Activated naive CD4-positive, alpha-beta T cell treated with anti-CD3 and anti-CD28 coated beads, Interleukin-2, amount 10 ng/mL, durations not matched to agents 7 days and 5 days (primary cell): ENCODE measurements at regions of chr16 and their contacts with region 1.

Region 1: DNA sequence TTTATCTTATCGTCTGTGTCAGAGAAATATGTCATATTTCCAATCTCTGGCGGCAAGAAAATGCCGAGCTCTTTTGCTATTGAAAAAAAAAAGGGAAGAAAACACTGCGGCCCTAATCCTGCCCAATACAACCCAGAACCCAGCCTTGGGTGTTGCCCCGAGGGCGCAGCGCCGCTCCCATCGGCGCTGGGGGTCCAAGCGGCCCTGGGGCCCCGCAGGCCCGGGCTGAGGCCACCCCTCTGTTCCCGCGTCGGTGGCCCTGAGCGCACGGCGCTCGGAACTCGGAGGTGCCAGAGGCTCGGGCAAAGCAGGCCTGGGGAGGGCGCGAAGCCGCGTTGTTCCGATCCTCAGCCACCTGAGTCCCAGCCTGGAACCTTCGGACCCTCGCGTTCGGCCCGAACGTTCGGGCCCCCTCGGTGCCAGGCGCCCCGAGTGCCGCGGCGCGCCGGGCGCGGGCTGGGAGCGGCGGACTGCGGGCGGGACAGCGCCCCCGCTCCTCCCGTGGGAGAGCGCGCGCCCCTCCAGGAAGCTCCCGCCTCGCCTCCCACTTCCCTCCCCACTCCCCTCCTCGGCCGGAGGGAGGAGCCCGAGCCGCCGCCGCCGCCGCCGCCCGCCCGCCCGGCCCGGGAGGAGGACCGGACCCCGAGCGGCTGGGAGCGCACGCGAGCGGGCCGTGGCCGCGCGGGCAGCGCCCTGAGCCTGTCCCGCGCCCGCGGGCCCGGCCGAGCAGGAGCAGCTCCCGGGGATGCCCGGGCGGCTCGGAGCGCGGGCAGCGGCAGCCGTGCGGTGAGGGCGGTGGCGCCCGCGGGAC is at the start of gene CPNE2:
- DNase-seq: peak; percentile 58
- H3K4me3 Mint-ChIP-seq: peak within 1 kb of the TSS; percentile 77
- H3K27ac Mint-ChIP-seq: no peak within 1 kb of the TSS
- H3K4me1 Mint-ChIP-seq: peaks cover 14% of the 10 kb centered on the region
- H3K27me3 Mint-ChIP-seq: peaks cover 61% of the 10 kb centered on the region

Region 2: GRCh38 chr16:56888806-56889205 is 203.4 kb before region 1 on chr16:
- CTCF ChIA-PET with region 1: no interaction called
- DNase-seq: no peak
- H3K4me3 Mint-ChIP-seq: no peak overlapping the region
- H3K27ac Mint-ChIP-seq: no peak overlapping the region
- H3K4me1 Mint-ChIP-seq: no peaks in the 10 kb centered on the region
- H3K27me3 Mint-ChIP-seq: peaks cover 38% of the 10 kb centered on the region

Region 3: GRCh38 chr16:57102888-57103858 is 11.0 kb after region 1 on chr16:
- CTCF ChIA-PET with region 1: interaction called, 14 read pairs
- DNase-seq: no peak
- H3K4me3 Mint-ChIP-seq: no peak overlapping the region
- H3K27ac Mint-ChIP-seq: no peak overlapping the region
- H3K4me1 Mint-ChIP-seq: peaks cover 15% of the 10 kb centered on the region
- H3K27me3 Mint-ChIP-seq: peaks cover 7% of the 10 kb centered on the region

Region 4: DNA sequence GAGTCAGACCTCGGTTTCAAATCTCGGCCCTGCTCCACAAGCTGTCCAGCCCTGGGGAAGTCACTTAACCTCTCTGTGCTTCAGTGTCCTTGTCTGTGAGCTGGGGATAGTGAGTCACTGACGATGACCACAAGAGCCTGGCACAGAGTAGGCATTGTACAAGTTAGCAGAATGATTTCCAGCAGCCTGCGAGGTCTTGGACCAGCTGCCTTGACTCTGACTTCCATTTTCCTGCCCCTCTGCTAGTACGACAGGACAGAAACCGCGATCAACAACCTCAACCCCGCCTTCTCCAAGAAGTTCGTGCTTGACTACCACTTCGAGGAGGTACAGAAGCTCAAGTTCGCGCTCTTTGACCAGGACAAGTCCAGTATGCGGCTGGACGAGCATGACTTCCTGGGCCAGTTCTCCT is 20.9 kb after region 1 on chr16:
- CTCF ChIA-PET with region 1: interaction called, 14 read pairs
- DNase-seq: no peak
- H3K4me3 Mint-ChIP-seq: no peak overlapping the region
- H3K27ac Mint-ChIP-seq: no peak overlapping the region
- H3K4me1 Mint-ChIP-seq: no peaks in the 10 kb centered on the region
- H3K27me3 Mint-ChIP-seq: peaks cover 12% of the 10 kb centered on the region

Region 5: DNA sequence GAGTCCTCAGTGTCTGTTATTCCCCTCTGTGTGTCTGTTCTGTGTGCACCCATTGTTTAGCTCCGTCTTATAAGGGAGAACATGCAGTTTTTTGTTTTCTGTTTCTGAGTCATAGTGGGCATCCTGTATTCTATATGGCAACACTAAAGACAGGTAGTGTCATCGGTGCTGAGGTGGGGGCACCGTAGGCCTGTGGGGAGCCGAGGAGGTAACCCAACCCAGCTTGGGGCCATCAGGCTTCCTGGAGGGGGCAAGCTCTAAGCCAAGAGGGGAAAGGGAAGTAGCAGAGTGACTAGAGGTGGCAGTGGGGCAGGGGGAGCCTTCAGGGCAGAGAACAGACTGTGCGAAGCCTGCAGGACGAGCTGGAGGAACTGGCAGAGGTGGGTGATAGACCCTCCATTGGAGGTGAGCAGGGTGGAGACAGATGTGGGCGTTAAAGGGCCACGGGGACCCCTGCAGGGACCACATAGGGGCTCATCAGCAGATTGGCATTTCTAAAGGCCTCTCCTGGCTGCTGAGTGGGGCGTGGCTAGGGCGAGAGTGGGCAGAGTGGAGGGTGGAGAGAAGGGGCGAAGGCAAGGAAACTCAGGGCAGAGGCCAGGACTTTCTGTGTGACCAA is 36.7 kb after region 1 on chr16:
- CTCF ChIA-PET with region 1: interaction called, 13 read pairs
- DNase-seq: peak; percentile 66
- H3K4me3 Mint-ChIP-seq: peak overlapping the region; percentile 16
- H3K27ac Mint-ChIP-seq: peak overlapping the region; percentile 91
- H3K4me1 Mint-ChIP-seq: peaks cover 87% of the 10 kb centered on the region
- H3K27me3 Mint-ChIP-seq: no peaks in the 10 kb centered on the region

Region 6: GRCh38 chr16:57167953-57168352 is 75.8 kb after region 1 on chr16:
- CTCF ChIA-PET with region 1: interaction called, 10 read pairs
- DNase-seq: peak; percentile 31
- H3K4me3 Mint-ChIP-seq: no peak overlapping the region
- H3K27ac Mint-ChIP-seq: no peak overlapping the region
- H3K4me1 Mint-ChIP-seq: peaks cover 3% of the 10 kb centered on the region
- H3K27me3 Mint-ChIP-seq: no peaks in the 10 kb centered on the region

Region 7: DNA sequence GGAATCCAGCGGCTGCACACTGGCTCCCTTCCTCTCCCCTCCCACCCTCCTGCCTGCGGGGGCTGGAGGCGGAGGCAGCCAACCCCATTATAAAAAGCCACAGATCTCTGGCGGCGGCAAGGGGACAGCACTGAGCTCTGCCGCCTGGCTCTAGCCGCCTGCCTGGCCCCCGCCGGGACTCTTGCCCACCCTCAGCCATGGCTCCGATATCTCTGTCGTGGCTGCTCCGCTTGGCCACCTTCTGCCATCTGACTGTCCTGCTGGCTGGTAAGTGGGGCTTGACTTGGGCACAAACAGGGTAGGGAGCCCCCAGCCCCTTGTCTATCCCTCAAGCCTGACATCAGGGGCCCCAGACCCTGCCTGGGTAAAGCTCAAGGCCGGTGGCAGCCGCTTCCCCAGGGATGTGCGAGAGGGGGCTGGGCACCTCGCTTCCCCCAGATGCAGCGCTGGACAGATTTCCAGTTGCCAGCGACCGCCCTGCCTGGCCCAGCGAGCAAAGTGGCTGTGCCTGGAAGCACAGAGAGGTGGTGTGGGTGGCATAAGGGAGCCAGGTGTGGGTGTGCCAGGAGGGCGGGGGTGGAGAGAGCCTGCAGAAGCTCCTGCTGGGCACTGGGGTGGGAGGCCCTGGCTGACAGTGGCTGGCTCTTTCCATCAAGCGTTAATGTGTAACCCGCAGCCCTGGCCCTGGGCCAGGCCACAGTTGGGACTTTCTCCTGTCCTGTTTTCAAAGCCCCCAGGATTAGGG is 280.4 kb after region 1 on chr16 and contains the start of gene CX3CL1:
- CTCF ChIA-PET with region 1: no interaction called
- DNase-seq: no peak
- H3K4me3 Mint-ChIP-seq: no peak within 1 kb of the TSS
- H3K27ac Mint-ChIP-seq: no peak within 1 kb of the TSS
- H3K4me1 Mint-ChIP-seq: no peaks in the 10 kb centered on the region
- H3K27me3 Mint-ChIP-seq: peaks cover 12% of the 10 kb centered on the region